ENCODE measurements at regions of chr17 and their contacts with region 1.

Region 1: DNA sequence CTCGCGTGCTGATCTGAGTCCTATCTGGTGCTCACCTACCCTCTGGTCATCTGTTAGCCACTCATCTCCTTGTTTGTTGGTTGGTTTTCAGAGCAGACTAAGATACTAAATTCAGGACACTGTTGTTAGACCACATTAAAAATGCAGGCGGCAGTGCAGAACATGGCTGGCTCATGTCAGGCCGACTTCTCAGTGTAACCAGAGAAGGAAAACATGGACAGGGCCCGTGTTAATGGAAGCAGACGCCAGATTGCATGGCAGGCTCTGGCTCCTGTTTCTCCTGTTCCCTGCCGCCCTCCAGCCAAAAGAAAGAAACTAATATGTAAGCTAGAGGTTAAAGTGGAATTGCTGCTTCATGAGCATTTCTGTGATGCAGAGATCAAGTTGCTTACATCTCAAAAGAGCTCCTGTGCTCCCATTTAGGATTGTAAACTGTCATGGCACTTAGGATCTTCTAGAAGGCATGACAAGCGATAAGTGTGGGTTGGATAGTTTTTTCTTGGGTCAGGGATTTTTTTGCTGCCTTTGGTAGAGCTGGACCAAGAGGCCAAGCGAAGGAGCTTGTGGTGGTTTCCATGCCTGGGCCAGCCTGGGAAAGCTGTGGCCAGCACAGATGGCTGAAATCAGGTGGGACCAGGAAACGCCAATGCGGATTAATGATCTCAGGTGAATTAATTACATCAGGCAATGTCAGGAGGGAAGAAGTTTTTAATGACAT is 56.1 kb downstream of the YPEL2 start:
- DNase-seq: no peak
- H3K4me3 ChIP-seq: no peak overlapping the region
- H3K27ac ChIP-seq: peak overlapping the region; percentile 65 to 70
- H3K4me1 ChIP-seq: peaks cover 0 to 66% (median 21%) of the 10 kb centered on the region in 4 donors
- H3K27me3 ChIP-seq: no peaks in the 10 kb centered on the region
- CTCF ChIP-seq: no peak

Region 2: DNA sequence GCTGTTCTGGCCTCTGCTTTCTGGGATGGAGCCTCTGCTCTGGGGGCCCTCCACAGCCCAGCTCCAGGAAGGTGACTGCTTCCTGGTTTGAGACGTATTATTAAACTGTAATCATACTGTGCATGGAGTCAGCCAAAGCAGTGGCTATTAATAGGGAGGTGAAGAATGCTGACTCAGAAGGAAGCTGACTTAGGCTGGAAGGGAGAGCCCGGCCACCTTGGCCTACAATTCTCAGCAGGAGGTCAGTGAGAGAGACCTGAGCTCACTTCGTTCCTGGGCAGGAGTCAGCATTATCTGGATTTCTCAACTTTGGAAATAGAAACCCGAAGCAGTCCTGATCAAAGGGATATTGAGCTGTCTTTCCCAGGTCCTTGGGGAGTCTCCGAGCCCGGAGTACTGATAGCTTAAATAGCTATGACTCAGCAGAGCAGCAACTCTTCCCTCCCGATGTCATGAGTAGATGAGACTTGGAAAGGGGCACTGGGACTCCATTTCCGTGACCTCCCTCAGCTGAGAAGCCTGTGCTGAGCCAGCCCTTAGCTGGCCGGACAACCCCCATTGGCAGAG is 35.7 kb after region 1 on chr17:
- intact Hi-C with region 1: loop called (anchors 5 kb)
- DNase-seq: peak; percentile 69 to 75
- H3K4me3 ChIP-seq: no peak overlapping the region
- H3K27ac ChIP-seq: peak overlapping the region; percentile 80 to 91
- H3K4me1 ChIP-seq: peaks cover 4 to 65% (median 54%) of the 10 kb centered on the region in 4 donors
- H3K27me3 ChIP-seq: no peaks in the 10 kb centered on the region
- CTCF ChIP-seq: no peak

Region 3: DNA sequence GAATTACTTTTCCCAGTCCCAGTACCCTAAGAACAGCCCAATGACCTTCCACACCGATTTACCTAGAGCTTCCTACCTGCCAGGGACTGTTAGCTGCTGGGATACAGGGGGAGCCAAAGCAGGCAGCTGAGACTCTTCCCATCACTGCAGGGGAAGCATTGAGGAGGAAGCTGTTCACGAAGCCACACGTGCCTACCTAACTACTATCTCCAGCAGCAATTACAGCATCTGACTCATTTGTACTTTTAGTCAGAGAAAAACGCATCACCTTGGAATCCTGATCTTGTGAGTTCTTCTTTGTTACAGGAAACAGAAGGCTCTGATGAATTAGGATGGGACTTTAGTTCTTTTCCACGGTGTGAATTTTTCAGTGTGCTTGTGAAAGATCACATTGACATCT is 64.2 kb after region 1 on chr17:
- intact Hi-C with region 1: no loop called
- DNase-seq: no peak
- H3K4me3 ChIP-seq: no peak overlapping the region
- H3K27ac ChIP-seq: no peak overlapping the region
- H3K4me1 ChIP-seq: no peaks in the 10 kb centered on the region
- H3K27me3 ChIP-seq: no peaks in the 10 kb centered on the region
- CTCF ChIP-seq: no peak

Measured in tibial artery (tissue), 4 donors.